Activated T-helper 1 cell treated with anti-CD3 and anti-CD28 coated beads, Interleukin-12 subunit alpha, Interleukin-12 subunit beta, Interleukin-2, Interleukin-4 antibody, amounts not matched to agents 30 ng/mL and 10 ng/mL and 1 ng/mL, durations not matched to agents 14 hours and 24 hours and 36 hours (primary cell): ENCODE measurements at regions of chr4 and their contacts with region 1.

Region 1: DNA sequence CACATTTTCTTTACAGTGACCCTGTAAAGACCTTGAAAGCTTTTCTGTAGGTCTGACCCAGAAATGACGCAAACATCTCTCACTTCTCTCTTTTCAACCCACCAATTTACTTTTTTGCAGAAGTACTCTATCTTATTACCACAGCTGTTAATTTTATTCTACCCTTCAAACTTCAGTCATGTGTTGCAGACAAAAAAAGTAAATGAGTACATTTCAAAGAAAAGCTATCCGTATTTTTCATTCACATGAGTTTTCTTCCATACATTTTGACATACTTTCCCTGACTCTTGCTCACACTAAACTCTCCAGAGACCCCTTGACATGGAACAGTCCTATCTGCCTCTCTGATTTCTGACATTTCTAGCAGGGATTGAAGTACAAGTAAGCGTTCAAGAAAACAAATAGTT is 51.7 kb downstream of the SLC7A11 start:
- DNase-seq: no peak
- H3K4me3 Mint-ChIP-seq: no peak overlapping the region
- H3K27ac Mint-ChIP-seq: no peak overlapping the region
- H3K4me1 Mint-ChIP-seq: peaks cover 4% of the 10 kb centered on the region
- H3K27me3 Mint-ChIP-seq: no peaks in the 10 kb centered on the region

Region 2: GRCh38 chr4:138222046-138222445 is 31.6 kb after region 1 on chr4:
- intact Hi-C with region 1: no loop called
- DNase-seq: no peak
- H3K4me3 Mint-ChIP-seq: no peak overlapping the region
- H3K27ac Mint-ChIP-seq: no peak overlapping the region
- H3K4me1 Mint-ChIP-seq: no peaks in the 10 kb centered on the region
- H3K27me3 Mint-ChIP-seq: no peaks in the 10 kb centered on the region

Region 3: GRCh38 chr4:138242076-138242833 is 51.8 kb after region 1 on chr4 and contains the start of gene SLC7A11:
- intact Hi-C with region 1: loop called (anchors 5 kb)
- DNase-seq: peak; percentile 70
- H3K4me3 Mint-ChIP-seq: peak within 1 kb of the TSS; percentile 88
- H3K27ac Mint-ChIP-seq: peak within 1 kb of the TSS; percentile 83
- H3K4me1 Mint-ChIP-seq: peaks cover 32% of the 10 kb centered on the region
- H3K27me3 Mint-ChIP-seq: peaks cover 4% of the 10 kb centered on the region
- total RNA-seq, gene SLC7A11: 2.6 and 2.7 TPM in 2 replicates